Sigmoid colon (tissue), 7 donors: ENCODE measurements at regions of chr5 and their contacts with region 1.

Region 1: GRCh38 chr5:68027519-68027918 is 188.0 kb upstream of the PIK3R1 start:
- DNase-seq: peak; percentile 85
- H3K4me3 ChIP-seq: no peak overlapping the region
- H3K27ac ChIP-seq: peak overlapping the region; percentile 75 to 86 (median 80)
- H3K4me1 ChIP-seq: peaks cover 3 to 51% (median 42%) of the 10 kb centered on the region in 4 donors
- H3K27me3 ChIP-seq: no peaks in the 10 kb centered on the region
- CTCF ChIP-seq: no peak
- EP300 ChIP-seq: peak; percentile 98 to 99 (median 98)
- POLR2A ChIP-seq: no peak

Region 2: DNA sequence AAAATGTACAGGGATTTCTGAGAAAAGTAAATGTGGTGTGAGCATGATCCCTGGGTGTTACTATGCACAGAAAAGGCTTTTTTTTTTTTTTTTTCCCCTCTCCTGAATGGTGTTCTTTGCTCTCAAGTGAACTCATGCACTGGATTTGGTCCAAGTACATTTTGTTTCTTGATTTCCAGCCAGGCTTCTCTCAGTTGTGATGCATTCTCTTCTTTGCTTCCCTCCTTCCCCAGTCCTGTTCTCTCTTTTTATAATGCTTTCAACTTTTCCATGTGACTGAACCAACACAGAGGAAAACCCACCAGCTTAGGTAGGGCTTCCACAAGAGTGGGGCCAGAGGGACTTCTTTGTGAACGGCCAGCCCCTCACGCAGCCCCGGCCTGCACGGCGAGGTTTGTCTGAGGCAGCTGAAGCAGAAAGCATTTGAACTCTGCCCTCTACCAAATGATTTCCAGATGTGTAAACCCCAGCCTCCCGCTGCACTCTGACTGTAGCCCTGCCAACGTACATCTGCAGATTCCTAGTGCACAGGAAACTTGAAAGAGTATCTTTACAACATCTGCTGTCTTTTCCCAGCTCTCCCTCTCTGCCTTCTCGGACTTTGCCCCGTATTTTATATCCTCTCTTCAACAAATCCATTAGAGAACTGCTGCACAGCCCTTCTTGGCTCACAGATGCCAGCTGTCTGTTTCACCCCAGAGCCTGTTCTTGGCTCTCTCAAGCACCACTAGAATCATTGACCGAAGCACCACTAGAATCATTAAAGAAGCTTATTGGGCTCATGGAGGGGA is 759.1 kb before region 1 on chr5:
- intact Hi-C with region 1: loop called (anchors 5 kb)
- DNase-seq: peak; percentile 95
- H3K4me3 ChIP-seq: peak overlapping the region in 2 of 4 donors; percentile 13 to 14
- H3K27ac ChIP-seq: peak overlapping the region; percentile 91 to 94 (median 92)
- H3K4me1 ChIP-seq: peaks cover 0 to 89% (median 80%) of the 10 kb centered on the region in 4 donors
- H3K27me3 ChIP-seq: no peaks in the 10 kb centered on the region
- CTCF ChIP-seq: no peak
- EP300 ChIP-seq: peak; percentile 94 to 99 (median 96)
- POLR2A ChIP-seq: no peak

Region 3: GRCh38 chr5:67648201-67648671 is 379.3 kb before region 1 on chr5:
- intact Hi-C with region 1: loop called (anchors 1 kb)
- DNase-seq: peak; percentile 98
- H3K4me3 ChIP-seq: no peak overlapping the region
- H3K27ac ChIP-seq: peak overlapping the region; percentile 77 to 82 (median 79)
- H3K4me1 ChIP-seq: peaks cover 0 to 62% (median 48%) of the 10 kb centered on the region in 4 donors
- H3K27me3 ChIP-seq: no peaks in the 10 kb centered on the region
- CTCF ChIP-seq: no peak
- EP300 ChIP-seq: peak; percentile 45 to 89 (median 74)
- POLR2A ChIP-seq: no peak

Region 4: GRCh38 chr5:67941614-67942401 is 85.7 kb before region 1 on chr5:
- intact Hi-C with region 1: loop called (anchors 5 kb)
- DNase-seq: no peak
- H3K4me3 ChIP-seq: no peak overlapping the region
- H3K27ac ChIP-seq: peak overlapping the region; percentile 56 to 73 (median 58)
- H3K4me1 ChIP-seq: peaks cover 0 to 23% (median 16%) of the 10 kb centered on the region in 4 donors
- H3K27me3 ChIP-seq: no peaks in the 10 kb centered on the region
- CTCF ChIP-seq: no peak
- EP300 ChIP-seq: peak in 3 of 4 donors; percentile 22 to 57 (median 28)
- POLR2A ChIP-seq: no peak

Region 5: GRCh38 chr5:67989456-67989855 is 38.1 kb before region 1 on chr5:
- intact Hi-C with region 1: no loop called
- DNase-seq: no peak
- H3K4me3 ChIP-seq: no peak overlapping the region
- H3K27ac ChIP-seq: no peak overlapping the region
- H3K4me1 ChIP-seq: peaks cover 0 to 41% (median 31%) of the 10 kb centered on the region in 4 donors
- H3K27me3 ChIP-seq: no peaks in the 10 kb centered on the region
- CTCF ChIP-seq: no peak
- EP300 ChIP-seq: no peak
- POLR2A ChIP-seq: no peak

Region 6: GRCh38 chr5:68215208-68215897 is 187.8 kb after region 1 on chr5 and contains the start of gene PIK3R1:
- intact Hi-C with region 1: loop called (anchors 2 kb)
- DNase-seq: peak; percentile 97
- H3K4me3 ChIP-seq: peak within 1 kb of the TSS; percentile 90 to 98 (median 92)
- H3K27ac ChIP-seq: peak within 1 kb of the TSS; percentile 94 to 99 (median 96)
- H3K4me1 ChIP-seq: peaks cover 0 to 31% (median 27%) of the 10 kb centered on the region in 4 donors
- H3K27me3 ChIP-seq: no peaks in the 10 kb centered on the region
- CTCF ChIP-seq: peak in 3 of 4 experiments; percentile 50 to 60 (median 51)
- EP300 ChIP-seq: no peak
- POLR2A ChIP-seq: peak; percentile 56 to 59
- total RNA-seq, gene PIK3R1: 177 to 227 (median 190) TPM

Region 7: GRCh38 chr5:68261569-68262065 is 234.1 kb after region 1 on chr5:
- intact Hi-C with region 1: loop called (anchors 5 kb)
- DNase-seq: no peak
- H3K4me3 ChIP-seq: no peak overlapping the region
- H3K27ac ChIP-seq: peak overlapping the region; percentile 67 to 83 (median 80)
- H3K4me1 ChIP-seq: peaks cover 0 to 91% (median 91%) of the 10 kb centered on the region in 4 donors
- H3K27me3 ChIP-seq: no peaks in the 10 kb centered on the region
- CTCF ChIP-seq: peak in 1 of 4 experiments; percentile 22
- EP300 ChIP-seq: no peak
- POLR2A ChIP-seq: no peak

Region 8: DNA sequence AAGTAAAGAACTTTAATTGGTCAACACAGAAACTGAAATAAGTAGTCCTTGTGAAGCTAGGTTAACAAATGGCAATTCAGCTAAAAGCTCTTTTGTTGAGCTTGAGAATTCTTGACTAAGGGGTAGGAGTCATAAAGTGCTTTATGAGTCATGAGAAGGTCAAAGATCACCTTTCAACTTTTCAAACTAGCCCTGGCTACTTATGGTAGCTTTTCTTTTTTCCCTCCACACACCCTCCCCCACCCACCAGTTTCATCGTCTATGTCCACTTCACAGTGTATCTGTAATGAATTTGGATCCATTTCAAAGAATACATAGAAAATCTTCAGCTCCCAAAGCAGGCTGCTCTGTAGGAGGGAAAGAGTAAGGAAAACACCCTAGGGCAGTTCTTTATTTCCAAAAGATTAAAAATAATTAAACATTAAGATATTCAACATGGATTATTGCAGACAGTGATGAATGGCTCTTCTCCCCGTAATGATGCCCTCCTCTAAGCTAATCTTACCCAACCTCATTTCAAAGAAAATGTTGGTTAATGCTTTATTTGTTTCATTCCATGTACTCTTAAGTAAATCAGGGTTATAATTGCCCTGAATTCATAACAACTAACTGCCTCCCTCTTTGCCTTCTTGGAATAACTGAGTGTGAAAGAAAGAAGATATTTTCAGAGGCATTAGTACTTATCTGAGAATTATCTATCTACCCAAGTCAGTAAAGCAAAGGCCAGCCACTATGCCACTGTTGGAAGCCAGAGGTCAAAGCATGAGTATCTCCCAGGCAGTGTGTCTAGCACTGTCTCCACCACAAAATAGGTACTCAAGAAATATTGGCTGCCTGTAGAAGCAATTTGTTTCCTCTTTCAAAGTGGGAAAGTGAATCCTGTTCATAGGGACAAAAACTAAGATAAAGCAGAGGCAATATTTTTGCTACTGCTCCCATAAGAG is 478.7 kb after region 1 on chr5:
- intact Hi-C with region 1: no loop called
- DNase-seq: no peak
- H3K4me3 ChIP-seq: no peak overlapping the region
- H3K27ac ChIP-seq: no peak overlapping the region
- H3K4me1 ChIP-seq: no peaks in the 10 kb centered on the region
- H3K27me3 ChIP-seq: no peaks in the 10 kb centered on the region
- CTCF ChIP-seq: no peak
- EP300 ChIP-seq: no peak
- POLR2A ChIP-seq: no peak